Activated naive CD4-positive, alpha-beta T cell treated with anti-CD3 and anti-CD28 coated beads for 36 hours (primary cell): ENCODE measurements at regions of chr6 and their contacts with region 1.

Region 1: GRCh38 chr6:112010328-112010727 is 43.6 kb upstream of the CCN6 start:
- DNase-seq: peak; percentile 65
- H3K4me3 Mint-ChIP-seq: no peak overlapping the region
- H3K27ac Mint-ChIP-seq: no peak overlapping the region
- H3K4me1 Mint-ChIP-seq: peaks cover 40% of the 10 kb centered on the region
- H3K27me3 Mint-ChIP-seq: no peaks in the 10 kb centered on the region

Region 2: GRCh38 chr6:112029045-112029822 is 18.9 kb after region 1 on chr6:
- CTCF ChIA-PET with region 1: interaction called, 56 read pairs
- intact Hi-C with region 1: loop called (anchors 1 kb)
- DNase-seq: peak; percentile 91
- H3K4me3 Mint-ChIP-seq: no peak overlapping the region
- H3K27ac Mint-ChIP-seq: peak overlapping the region; percentile 90
- H3K4me1 Mint-ChIP-seq: peaks cover 81% of the 10 kb centered on the region
- H3K27me3 Mint-ChIP-seq: no peaks in the 10 kb centered on the region

Region 3: GRCh38 chr6:112037783-112038216 is 27.5 kb after region 1 on chr6:
- CTCF ChIA-PET with region 1: interaction called, 310 read pairs
- intact Hi-C with region 1: no loop called
- DNase-seq: peak; percentile 43
- H3K4me3 Mint-ChIP-seq: no peak overlapping the region
- H3K27ac Mint-ChIP-seq: no peak overlapping the region
- H3K4me1 Mint-ChIP-seq: peaks cover 77% of the 10 kb centered on the region
- H3K27me3 Mint-ChIP-seq: no peaks in the 10 kb centered on the region